ENCODE measurements at regions of chr17 and their contacts with region 1.

Region 1: DNA sequence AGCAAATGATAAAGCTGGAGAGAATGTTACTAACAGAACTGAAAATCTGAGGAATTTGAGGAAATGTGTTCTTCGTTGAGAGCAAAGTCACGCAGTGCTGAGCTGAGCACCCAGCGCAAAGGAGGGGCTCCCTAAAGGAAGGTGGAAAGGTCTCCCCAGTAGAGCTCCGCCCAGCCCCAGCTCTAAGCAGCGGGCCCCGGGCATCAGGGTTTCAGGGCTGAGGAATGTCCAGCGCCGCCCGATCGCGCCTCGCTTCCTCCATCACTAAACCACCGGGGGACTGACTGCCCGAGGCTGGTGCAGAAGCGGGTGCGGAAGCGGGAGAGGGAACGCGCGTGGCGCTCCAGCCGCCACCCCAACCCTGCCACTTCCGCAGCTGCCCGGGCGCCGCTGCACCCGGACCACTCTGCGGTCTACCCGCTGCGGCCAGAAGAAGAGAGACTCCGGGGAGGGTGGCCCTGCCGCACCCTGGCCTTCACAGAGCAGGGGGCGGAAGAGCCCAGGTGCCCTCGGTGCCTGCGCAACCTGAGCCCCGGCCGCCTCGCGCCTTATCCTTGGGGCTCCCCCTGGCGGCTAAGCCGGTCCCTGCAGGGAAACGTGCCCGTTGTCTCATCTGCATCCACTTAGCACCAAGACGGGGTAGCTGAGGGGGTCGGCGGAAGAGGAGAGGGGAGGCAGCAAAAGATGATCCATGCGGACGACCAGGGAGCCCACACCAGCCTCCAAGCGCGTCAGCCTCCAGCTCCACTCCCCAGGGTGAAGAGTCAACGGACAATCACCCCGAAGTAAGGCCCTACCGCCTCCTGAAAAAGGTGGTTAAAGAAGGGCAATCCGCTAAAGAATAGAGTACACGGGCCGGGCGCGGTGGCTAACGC is 12.4 kb upstream of the GUCY2D start:
- DNase-seq: peak; percentile 93
- ATAC-seq: peak; percentile 87
- H3K4me3 Mint-ChIP-seq: peak overlapping the region; percentile 69
- H3K27ac Mint-ChIP-seq: peak overlapping the region; percentile 88
- H3K4me1 Mint-ChIP-seq: peaks cover 25% of the 10 kb centered on the region
- H3K27me3 Mint-ChIP-seq: peaks cover 22% of the 10 kb centered on the region

Region 2: DNA sequence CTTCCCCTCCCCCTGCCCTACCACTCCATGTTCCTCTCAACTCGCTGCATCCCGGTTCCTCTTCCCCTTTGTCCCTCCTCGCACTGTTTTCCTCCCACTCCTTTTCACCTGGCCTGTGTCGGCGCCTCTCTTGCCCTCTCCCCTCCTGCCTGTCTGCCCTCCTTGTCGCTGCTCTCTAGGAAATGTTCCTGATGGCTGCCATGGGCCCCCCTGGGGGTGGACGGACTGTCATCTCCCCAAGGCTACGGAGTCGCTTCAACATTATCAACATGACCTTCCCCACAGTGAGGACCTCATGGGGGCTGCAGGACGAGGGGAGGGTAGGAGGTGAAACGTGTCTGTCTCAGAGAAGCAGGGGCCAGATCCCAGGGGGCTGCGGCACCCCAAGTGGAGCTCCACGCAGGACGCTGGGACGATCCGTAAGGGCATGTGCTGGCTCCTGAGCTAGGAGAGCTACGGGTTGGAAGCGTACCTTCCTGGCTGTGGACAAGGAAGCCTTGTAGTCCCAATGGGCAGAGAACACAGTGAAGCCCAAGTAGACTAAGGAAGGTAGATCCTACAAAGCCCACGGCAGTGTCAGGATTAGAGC is 195.8 kb before region 1 on chr17:
- CTCF ChIA-PET with region 1: no interaction called
- DNase-seq: no peak
- ATAC-seq: no peak
- H3K4me3 Mint-ChIP-seq: no peak overlapping the region
- H3K27ac Mint-ChIP-seq: no peak overlapping the region
- H3K4me1 Mint-ChIP-seq: no peaks in the 10 kb centered on the region
- H3K27me3 Mint-ChIP-seq: no peaks in the 10 kb centered on the region

Region 3: GRCh38 chr17:7834962-7835813 is 154.8 kb before region 1 on chr17:
- CTCF ChIA-PET with region 1: interaction called, 22 read pairs
- DNase-seq: peak; percentile 91
- ATAC-seq: peak; percentile 60
- H3K4me3 Mint-ChIP-seq: peak overlapping the region; percentile 77
- H3K27ac Mint-ChIP-seq: peak overlapping the region; percentile 84
- H3K4me1 Mint-ChIP-seq: peaks cover 49% of the 10 kb centered on the region
- H3K27me3 Mint-ChIP-seq: peaks cover 13% of the 10 kb centered on the region

Region 4: DNA sequence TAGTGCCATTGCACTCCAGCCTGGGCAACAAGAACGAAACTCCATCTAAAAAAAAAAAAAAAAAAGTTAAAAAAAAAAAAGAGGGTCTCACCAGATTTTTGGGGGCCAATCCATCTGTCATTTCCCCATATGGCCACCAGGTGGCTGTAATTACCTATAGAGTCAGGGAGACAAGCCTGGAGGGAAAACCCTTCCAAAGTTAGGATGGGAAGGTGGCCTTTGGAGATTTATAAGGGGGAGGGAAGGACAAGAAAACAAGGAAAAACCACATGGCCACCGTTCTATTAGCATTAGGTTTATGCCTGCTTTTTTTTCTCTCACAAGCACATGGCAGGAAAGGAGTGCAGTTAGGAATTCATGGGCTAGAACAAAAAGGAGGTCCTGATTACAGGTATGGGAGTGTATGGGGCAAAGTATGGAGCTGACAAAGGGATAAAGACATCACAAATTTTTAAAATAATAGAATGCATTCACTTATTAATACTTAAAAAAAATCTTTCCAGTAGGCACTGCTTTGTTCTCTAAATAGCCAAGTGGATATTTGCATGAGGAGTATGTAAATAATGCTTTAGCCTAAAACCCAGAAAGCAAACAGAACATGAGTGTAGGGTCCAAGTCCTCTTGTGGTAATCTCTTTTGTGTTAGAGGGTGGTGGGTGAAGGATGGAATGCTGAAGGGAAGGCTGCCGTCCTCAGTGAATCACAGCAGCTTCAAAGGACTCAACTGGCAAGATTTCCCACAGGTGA is 127.2 kb before region 1 on chr17:
- CTCF ChIA-PET with region 1: interaction called, 107 read pairs
- DNase-seq: peak; percentile 70
- ATAC-seq: no peak
- H3K4me3 Mint-ChIP-seq: no peak overlapping the region
- H3K27ac Mint-ChIP-seq: no peak overlapping the region
- H3K4me1 Mint-ChIP-seq: peaks cover 11% of the 10 kb centered on the region
- H3K27me3 Mint-ChIP-seq: no peaks in the 10 kb centered on the region

Region 5: GRCh38 chr17:7915611-7916382 is 74.2 kb before region 1 on chr17 and contains the start of gene RNF227:
- CTCF ChIA-PET with region 1: interaction called, 312 read pairs
- DNase-seq: peak; percentile 89
- ATAC-seq: peak; percentile 87
- H3K4me3 Mint-ChIP-seq: peak within 1 kb of the TSS; percentile 87
- H3K27ac Mint-ChIP-seq: peak within 1 kb of the TSS; percentile 94
- H3K4me1 Mint-ChIP-seq: peaks cover 28% of the 10 kb centered on the region
- H3K27me3 Mint-ChIP-seq: no peaks in the 10 kb centered on the region
- total RNA-seq, gene RNF227: 2.8 to 3.9 TPM

Region 6: DNA sequence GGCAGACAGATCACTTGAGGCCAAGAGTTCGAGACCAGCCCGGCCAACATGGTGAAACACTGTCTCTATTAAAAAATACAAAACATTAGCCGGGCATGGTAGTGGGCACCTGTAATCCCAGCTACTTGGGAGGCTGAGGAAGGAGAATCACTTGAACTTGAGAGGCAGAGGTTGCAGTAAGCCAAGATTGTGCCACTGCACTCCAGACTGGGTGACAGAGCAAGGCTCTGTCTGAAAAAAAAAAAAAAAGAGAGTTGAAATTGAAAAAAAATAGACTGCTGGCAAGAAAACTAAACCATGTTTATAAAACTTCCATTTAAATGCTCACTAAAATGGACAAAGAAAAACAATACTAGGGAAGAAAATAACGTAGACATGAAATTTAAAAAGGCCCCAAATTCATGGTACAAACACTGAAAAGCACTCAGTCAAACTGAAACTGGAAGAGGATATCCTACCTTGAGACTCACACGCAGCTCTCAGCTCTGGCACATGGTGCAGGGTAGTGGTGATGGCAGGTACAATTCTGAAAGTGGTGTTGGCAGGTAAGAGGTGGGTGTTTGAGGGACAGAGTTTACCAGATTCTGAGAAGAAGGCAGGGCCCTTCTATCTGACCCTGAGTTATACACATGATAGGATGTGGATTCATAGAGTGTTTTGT is 38.7 kb before region 1 on chr17:
- CTCF ChIA-PET with region 1: interaction called, 15 read pairs
- DNase-seq: peak; percentile 81
- ATAC-seq: peak; percentile 99
- H3K4me3 Mint-ChIP-seq: peak overlapping the region; percentile 7
- H3K27ac Mint-ChIP-seq: peak overlapping the region; percentile 86
- H3K4me1 Mint-ChIP-seq: peaks cover 43% of the 10 kb centered on the region
- H3K27me3 Mint-ChIP-seq: no peaks in the 10 kb centered on the region

Region 7: DNA sequence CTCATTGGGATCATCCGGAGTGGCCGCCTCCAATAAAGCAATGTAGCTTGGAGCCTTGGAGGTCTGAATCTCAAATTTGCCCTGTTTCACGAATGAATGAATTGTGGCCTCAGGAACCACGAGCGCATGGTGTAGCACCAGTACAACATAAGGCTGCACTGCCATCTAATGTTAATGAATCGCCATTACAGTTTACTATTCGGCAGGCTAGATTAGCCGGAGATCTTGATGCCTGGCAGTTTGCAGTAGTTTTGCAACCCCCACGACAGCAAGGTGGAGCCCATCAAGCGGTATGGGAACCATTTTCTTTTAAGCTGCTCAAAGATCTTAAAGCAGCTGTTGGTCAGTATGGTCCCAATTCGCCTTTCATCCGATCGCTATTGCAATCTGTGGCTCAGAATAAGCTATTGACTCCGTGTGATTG is 67.7 kb after region 1 on chr17:
- CTCF ChIA-PET with region 1: interaction called, 71 read pairs
- DNase-seq: peak; percentile 71
- ATAC-seq: peak; percentile 79
- H3K4me3 Mint-ChIP-seq: no peak overlapping the region
- H3K27ac Mint-ChIP-seq: no peak overlapping the region
- H3K4me1 Mint-ChIP-seq: peaks cover 28% of the 10 kb centered on the region
- H3K27me3 Mint-ChIP-seq: peaks cover 55% of the 10 kb centered on the region